Activated T-helper 1 cell treated with anti-CD3 and anti-CD28 coated beads, Interleukin-12 subunit alpha, Interleukin-12 subunit beta, Interleukin-2, Interleukin-4 antibody, amounts not matched to agents 30 ng/mL and 10 ng/mL and 1 ng/mL, durations not matched to agents 14 hours and 24 hours and 36 hours (primary cell): ENCODE measurements at regions of chr10 and their contacts with region 1.

Region 1: GRCh38 chr10:48656241-48656913 is 28.3 kb upstream of the WDFY4 start:
- DNase-seq: peak; percentile 85
- H3K4me3 Mint-ChIP-seq: peak overlapping the region; percentile 79
- H3K27ac Mint-ChIP-seq: no peak overlapping the region
- H3K4me1 Mint-ChIP-seq: peaks cover 10% of the 10 kb centered on the region
- H3K27me3 Mint-ChIP-seq: peaks cover 39% of the 10 kb centered on the region

Region 2: GRCh38 chr10:48363617-48364355 is 292.6 kb before region 1 on chr10:
- intact Hi-C with region 1: loop called (anchors 1 kb)
- DNase-seq: no peak
- H3K4me3 Mint-ChIP-seq: no peak overlapping the region
- H3K27ac Mint-ChIP-seq: no peak overlapping the region
- H3K4me1 Mint-ChIP-seq: peaks cover 5% of the 10 kb centered on the region
- H3K27me3 Mint-ChIP-seq: no peaks in the 10 kb centered on the region

Region 3: DNA sequence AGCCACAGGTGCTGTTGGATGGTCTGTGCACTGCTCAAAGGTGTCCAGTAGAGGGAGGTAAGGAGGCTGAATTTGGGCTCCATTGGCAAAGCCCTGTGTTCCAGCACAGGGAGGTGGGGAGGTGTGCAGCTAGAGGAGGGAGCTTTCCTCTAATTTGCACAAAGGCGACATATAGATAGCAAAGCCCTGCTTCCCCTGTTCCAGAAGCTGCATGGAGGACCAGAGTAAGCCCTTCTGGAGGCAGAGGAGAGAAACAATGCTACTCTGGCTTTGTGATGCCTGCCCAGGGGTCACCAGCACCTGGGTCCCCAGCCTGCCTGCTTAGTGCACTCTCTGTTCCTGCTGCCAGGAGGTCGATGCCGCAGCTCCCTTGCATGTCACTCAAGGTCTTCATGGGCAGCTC is 48.1 kb before region 1 on chr10:
- intact Hi-C with region 1: loop called (anchors 1 kb)
- DNase-seq: peak; percentile 20
- H3K4me3 Mint-ChIP-seq: no peak overlapping the region
- H3K27ac Mint-ChIP-seq: no peak overlapping the region
- H3K4me1 Mint-ChIP-seq: no peaks in the 10 kb centered on the region
- H3K27me3 Mint-ChIP-seq: peaks cover 31% of the 10 kb centered on the region

Region 4: DNA sequence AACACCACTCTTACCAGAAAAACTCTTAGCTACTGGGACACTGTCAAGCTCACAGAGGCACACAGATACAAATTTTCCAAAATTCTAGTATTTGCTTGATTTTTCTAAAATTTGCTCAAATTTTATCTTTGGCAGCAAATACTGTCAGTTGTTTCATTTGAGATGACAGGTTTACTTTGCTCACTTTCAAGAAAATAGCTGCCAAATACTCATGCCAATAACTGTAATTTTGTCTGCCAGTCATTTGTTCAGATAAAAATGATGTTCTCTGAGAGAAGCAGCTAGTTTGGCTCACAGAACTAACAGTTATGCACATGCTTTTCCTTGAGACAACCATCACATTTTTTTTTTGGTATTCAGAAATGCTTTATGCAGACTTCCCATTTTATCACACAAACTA is 200.5 kb after region 1 on chr10:
- intact Hi-C with region 1: loop called (anchors 5 kb)
- DNase-seq: no peak
- H3K4me3 Mint-ChIP-seq: no peak overlapping the region
- H3K27ac Mint-ChIP-seq: no peak overlapping the region
- H3K4me1 Mint-ChIP-seq: no peaks in the 10 kb centered on the region
- H3K27me3 Mint-ChIP-seq: peaks cover 11% of the 10 kb centered on the region

Region 5: DNA sequence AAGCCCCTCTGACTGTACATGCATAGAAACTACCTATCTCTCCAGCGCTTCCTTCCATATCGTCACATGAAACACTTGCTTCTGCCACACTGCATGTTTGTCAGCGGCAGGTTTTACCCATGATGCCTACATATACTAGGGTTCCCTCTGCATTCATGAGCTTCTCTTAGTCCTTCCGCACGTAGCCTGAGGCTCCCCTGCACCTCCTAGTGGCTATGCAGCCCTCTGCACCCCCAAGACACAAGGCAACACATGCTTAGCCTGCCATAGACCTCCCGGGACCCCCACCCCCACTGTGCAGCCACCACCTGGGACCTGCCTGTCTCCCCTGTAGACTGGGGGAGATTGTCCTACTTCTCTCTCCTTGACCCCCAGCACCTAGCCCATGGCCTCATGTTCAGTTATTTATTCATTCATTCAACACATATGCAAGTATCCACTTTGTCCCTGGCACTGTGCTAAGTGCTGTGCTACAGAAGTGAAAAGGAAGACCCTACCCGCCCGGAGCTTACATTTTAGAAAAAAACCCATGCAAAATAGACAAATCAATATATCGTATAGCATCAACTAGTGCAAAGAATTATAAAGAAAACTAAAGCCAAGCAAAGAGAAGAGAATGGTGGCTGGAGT is 508.3 kb after region 1 on chr10:
- intact Hi-C with region 1: loop called (anchors 1 kb)
- DNase-seq: peak; percentile 31
- H3K4me3 Mint-ChIP-seq: no peak overlapping the region
- H3K27ac Mint-ChIP-seq: peak overlapping the region; percentile 25
- H3K4me1 Mint-ChIP-seq: peaks cover 33% of the 10 kb centered on the region
- H3K27me3 Mint-ChIP-seq: no peaks in the 10 kb centered on the region

Region 6: DNA sequence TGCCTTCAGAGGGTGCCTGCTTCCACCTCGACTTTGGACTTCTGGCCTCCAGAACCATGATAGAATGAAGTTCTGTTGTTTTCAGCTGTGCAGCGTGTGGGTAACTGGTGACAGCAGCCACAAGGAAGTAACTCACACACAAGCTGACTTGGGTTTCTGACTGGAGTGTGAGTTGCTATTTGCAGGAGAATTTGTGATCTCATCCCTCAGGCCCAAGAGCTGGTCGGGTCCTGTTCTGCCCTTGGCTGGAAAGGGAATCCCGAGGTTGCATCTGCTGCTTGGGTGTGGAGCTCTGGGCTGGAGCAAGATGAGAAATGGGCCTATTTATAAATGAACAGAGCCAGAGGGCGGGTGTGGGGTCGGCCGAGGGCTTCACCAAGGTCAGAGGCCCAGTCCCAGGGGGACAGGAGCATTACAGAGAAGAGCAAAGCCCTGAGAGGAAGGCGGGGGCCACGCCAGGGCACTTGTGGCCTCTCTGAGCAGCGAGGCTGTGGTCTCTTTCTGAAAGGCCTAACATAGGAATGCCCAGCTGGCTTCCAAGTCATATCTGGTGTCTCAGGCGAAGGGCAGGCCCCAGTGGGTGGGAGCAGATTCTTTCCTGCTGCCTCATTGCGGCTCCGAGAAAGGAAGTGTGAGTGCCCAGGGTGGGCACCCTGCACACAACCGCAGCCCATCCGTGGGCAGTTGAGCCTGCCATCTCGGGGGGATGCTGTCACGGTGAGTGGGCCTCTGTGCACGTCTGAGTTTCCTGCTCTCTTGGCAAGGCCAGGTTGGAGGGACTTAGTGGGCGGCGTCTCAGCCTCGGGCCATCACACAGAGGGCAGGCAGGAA is 616.1 kb after region 1 on chr10:
- intact Hi-C with region 1: no loop called
- DNase-seq: no peak
- H3K4me3 Mint-ChIP-seq: no peak overlapping the region
- H3K27ac Mint-ChIP-seq: no peak overlapping the region
- H3K4me1 Mint-ChIP-seq: no peaks in the 10 kb centered on the region
- H3K27me3 Mint-ChIP-seq: peaks cover 6% of the 10 kb centered on the region

Region 7: DNA sequence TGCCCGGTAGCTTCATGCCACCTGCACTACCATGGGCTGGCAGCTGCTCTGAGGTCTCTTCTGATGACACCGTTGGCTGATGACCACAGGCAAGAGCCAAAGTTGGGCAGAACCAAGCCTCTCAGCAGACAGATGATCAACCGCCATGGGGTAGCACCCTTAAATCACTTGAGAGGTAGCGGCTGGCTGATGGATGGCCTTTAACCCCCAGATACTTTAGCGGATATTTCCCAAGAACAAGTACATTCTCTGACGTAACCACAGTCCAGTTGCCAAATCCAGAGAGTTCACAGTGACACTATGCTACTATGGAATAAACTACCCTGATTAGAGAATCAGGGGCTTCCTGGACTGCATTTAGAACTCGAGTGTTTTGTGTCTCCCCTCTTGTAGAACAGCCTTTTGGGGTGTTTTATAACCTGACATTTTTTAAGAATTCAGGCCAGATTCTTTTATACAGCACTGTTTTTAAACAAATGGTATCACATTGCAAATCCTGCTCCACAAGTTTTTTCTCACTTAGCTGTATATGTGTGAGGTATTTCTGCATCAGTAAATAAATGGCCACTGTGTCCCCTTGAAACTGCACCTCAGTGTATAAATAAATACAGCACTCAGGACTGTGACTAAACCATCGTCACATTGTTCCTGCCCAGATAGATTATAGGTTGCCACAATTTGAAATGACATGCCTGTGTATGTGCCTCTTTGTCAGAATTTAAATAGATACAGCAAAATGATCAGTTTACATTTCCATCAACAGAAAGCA is 770.4 kb after region 1 on chr10:
- intact Hi-C with region 1: no loop called
- DNase-seq: no peak
- H3K4me3 Mint-ChIP-seq: no peak overlapping the region
- H3K27ac Mint-ChIP-seq: no peak overlapping the region
- H3K4me1 Mint-ChIP-seq: no peaks in the 10 kb centered on the region
- H3K27me3 Mint-ChIP-seq: peaks cover 2% of the 10 kb centered on the region

Region 8: GRCh38 chr10:49518982-49519578 is 862.7 kb after region 1 on chr10:
- intact Hi-C with region 1: loop called (anchors 1 kb)
- DNase-seq: no peak
- H3K4me3 Mint-ChIP-seq: no peak overlapping the region
- H3K27ac Mint-ChIP-seq: no peak overlapping the region
- H3K4me1 Mint-ChIP-seq: no peaks in the 10 kb centered on the region
- H3K27me3 Mint-ChIP-seq: no peaks in the 10 kb centered on the region